ENCODE measurements at regions of chr9 and their contacts with region 1.

Region 1: GRCh38 chr9:124812401-124813016 is 35.6 kb downstream of the OLFML2A start:
- DNase-seq: no peak
- H3K4me3 ChIP-seq: no peak overlapping the region
- H3K27ac ChIP-seq: no peak overlapping the region
- H3K4me1 ChIP-seq: no peaks in the 10 kb centered on the region
- H3K27me3 ChIP-seq: no peaks in the 10 kb centered on the region
- CTCF ChIP-seq: no peak

Region 2: GRCh38 chr9:124503713-124504529 is 308.6 kb before region 1 on chr9:
- intact Hi-C with region 1: loop called (anchors 10 kb)
- DNase-seq: no peak
- H3K4me3 ChIP-seq: peak overlapping the region; percentile 18 to 45
- H3K27ac ChIP-seq: no peak overlapping the region
- H3K4me1 ChIP-seq: peaks cover 0 to 6% of the 10 kb centered on the region in 2 donors
- H3K27me3 ChIP-seq: peaks cover 13% of the 10 kb centered on the region
- CTCF ChIP-seq: no peak

Measured in ascending aorta (tissue), 2 donors.